Heart right ventricle (tissue), 16 donors: ENCODE measurements at regions of chr11 and their contacts with region 1.

Region 1: DNA sequence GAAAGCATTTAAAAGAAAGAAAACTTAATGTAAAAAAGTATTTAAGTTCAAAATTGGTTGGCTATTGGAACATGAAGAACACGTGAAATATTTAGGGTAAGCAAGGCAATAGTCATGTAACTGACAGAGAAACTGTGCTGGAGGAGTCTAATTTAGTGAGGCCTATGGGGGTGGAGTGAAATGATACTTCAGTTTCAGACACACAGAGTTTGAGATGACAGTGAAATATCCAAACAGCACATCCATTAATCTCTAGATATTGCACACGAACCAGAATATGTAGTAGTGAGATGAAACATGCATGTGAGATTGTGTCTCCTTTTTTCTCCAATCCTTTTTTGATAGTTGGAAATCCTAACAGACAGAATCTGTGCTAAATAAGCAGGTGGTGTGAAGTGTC is 739.0 kb downstream of the CNTN5 start:
- DNase-seq: no peak
- ATAC-seq: no peak
- H3K4me3 ChIP-seq: no peak overlapping the region
- H3K27ac ChIP-seq: no peak overlapping the region
- H3K4me1 ChIP-seq: no peaks in the 10 kb centered on the region
- H3K27me3 ChIP-seq: no peaks in the 10 kb centered on the region
- CTCF ChIP-seq: no peak

Region 2: DNA sequence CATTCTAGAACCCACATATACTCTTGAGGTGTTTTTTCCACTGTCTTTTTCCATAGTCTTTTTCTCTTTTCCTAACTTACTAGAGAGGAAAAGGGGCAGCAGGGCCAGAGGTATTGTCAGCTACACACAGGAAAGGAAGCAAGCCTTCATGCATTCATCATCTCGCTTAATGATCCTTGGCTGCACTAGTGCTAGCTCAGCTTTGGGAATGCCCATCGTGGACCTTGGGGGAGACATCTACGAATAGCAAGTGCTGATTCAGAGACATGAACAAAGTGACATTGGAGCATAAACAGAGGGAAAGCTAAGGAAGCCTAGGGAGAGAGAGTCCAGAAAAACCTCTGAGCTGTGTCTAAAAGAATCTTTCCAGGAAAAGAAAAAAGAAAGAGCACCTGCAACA is 461.0 kb after region 1 on chr11:
- intact Hi-C with region 1: loop called in 1 of 10 experiments (anchors 5 kb)
- DNase-seq: no peak
- ATAC-seq: no peak
- H3K4me3 ChIP-seq: no peak overlapping the region
- H3K27ac ChIP-seq: no peak overlapping the region
- H3K4me1 ChIP-seq: no peaks in the 10 kb centered on the region
- H3K27me3 ChIP-seq: no peaks in the 10 kb centered on the region
- CTCF ChIP-seq: no peak